SK-N-SH (cell line): ENCODE measurements at regions of chr10 and their contacts with region 1.

Region 1: GRCh38 chr10:12656518-12657142 is 307.3 kb downstream of the CAMK1D start:
- DNase-seq: peak; percentile 56
- H3K4me3 ChIP-seq: peak overlapping the region in 1 of 2 experiments; percentile 28; a peak in 1 of 4 replicates
- H3K27ac ChIP-seq: no peak overlapping the region
- H3K4me1 ChIP-seq: no peaks in the 10 kb centered on the region; a peak in 1 of 4 replicates
- H3K27me3 ChIP-seq: no peaks in the 10 kb centered on the region
- CTCF ChIP-seq: peak; percentile 67
- EP300 ChIP-seq: no peak
- RAD21 ChIP-seq: peak; percentile 81

Region 2: GRCh38 chr10:12264204-12264940 is 392.3 kb before region 1 on chr10:
- CTCF ChIA-PET with region 1: interaction called, 68 read pairs
- POLR2A ChIA-PET with region 1: no interaction called
- DNase-seq: peak; percentile 88
- H3K4me3 ChIP-seq: peak overlapping the region; percentile 45 to 60
- H3K27ac ChIP-seq: peak overlapping the region in 1 of 2 experiments; percentile 45; a peak in 1 of 4 replicates
- H3K4me1 ChIP-seq: no peaks in the 10 kb centered on the region; a peak in 1 of 4 replicates
- H3K27me3 ChIP-seq: no peaks in the 10 kb centered on the region
- CTCF ChIP-seq: peak; percentile 90
- EP300 ChIP-seq: no peak; a peak in 1 of 4 replicates
- RAD21 ChIP-seq: peak; percentile 94

Region 3: DNA sequence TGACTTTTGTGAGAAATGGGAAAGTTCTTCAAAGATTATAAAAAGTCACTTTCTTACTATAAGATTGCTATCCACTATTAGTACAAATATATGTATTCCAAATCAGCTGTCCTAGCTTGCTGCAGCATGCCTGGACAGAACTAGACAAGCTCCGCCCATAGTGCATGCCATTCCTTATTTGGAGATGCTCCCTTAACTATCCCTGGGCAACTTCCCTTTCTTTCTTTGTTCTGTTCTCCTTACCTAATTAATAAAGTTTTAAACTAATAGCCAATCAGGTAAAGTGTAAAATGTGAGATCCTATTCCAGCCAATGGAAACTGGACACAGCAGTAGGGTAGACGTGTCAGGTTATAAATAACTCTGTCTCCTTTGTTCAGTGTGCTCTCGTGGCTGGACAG is 25.4 kb before region 1 on chr10:
- CTCF ChIA-PET with region 1: no interaction called
- POLR2A ChIA-PET with region 1: no interaction called
- DNase-seq: no peak
- H3K4me3 ChIP-seq: no peak overlapping the region
- H3K27ac ChIP-seq: no peak overlapping the region
- H3K4me1 ChIP-seq: no peaks in the 10 kb centered on the region; a peak in 1 of 4 replicates
- H3K27me3 ChIP-seq: no peaks in the 10 kb centered on the region
- CTCF ChIP-seq: no peak
- EP300 ChIP-seq: no peak
- RAD21 ChIP-seq: no peak

Region 4: GRCh38 chr10:12644380-12645144 is 12.1 kb before region 1 on chr10:
- CTCF ChIA-PET with region 1: interaction called, 14 read pairs
- POLR2A ChIA-PET with region 1: no interaction called
- DNase-seq: no peak
- H3K4me3 ChIP-seq: no peak overlapping the region
- H3K27ac ChIP-seq: no peak overlapping the region
- H3K4me1 ChIP-seq: no peaks in the 10 kb centered on the region
- H3K27me3 ChIP-seq: no peaks in the 10 kb centered on the region
- CTCF ChIP-seq: no peak
- EP300 ChIP-seq: no peak
- RAD21 ChIP-seq: no peak

Region 5: GRCh38 chr10:12667052-12667451 is 10.4 kb after region 1 on chr10:
- CTCF ChIA-PET with region 1: interaction called, 10 read pairs
- POLR2A ChIA-PET with region 1: no interaction called
- DNase-seq: peak; percentile 23
- H3K4me3 ChIP-seq: no peak overlapping the region
- H3K27ac ChIP-seq: no peak overlapping the region
- H3K4me1 ChIP-seq: peaks cover 0 to 8% of the 10 kb centered on the region in 2 experiments; a peak in 2 of 4 replicates
- H3K27me3 ChIP-seq: no peaks in the 10 kb centered on the region
- CTCF ChIP-seq: no peak
- EP300 ChIP-seq: no peak
- RAD21 ChIP-seq: no peak